Heart left ventricle (tissue), 16 donors: ENCODE measurements at regions of chr17 and their contacts with region 1.

Region 1: GRCh38 chr17:10549096-10549842 is at the start of gene MYH2:
- DNase-seq: no peak
- ATAC-seq: no peak
- H3K4me3 ChIP-seq: no peak within 1 kb of the TSS
- H3K27ac ChIP-seq: no peak within 1 kb of the TSS
- H3K4me1 ChIP-seq: no peaks in the 10 kb centered on the region
- H3K27me3 ChIP-seq: no peaks in the 10 kb centered on the region
- CTCF ChIP-seq: no peak
- POLR2A ChIP-seq: no peak
- total RNA-seq, gene MYH2: 0.07 to 0.40 TPM in 2 of 9 donors, not detected in the others

Region 2: GRCh38 chr17:10482252-10482651 is 67.0 kb before region 1 on chr17:
- intact Hi-C with region 1: loop called in 1 of 10 experiments (anchors 10 kb)
- DNase-seq: no peak
- ATAC-seq: no peak
- H3K4me3 ChIP-seq: no peak overlapping the region
- H3K27ac ChIP-seq: no peak overlapping the region
- H3K4me1 ChIP-seq: no peaks in the 10 kb centered on the region
- H3K27me3 ChIP-seq: no peaks in the 10 kb centered on the region
- CTCF ChIP-seq: no peak
- POLR2A ChIP-seq: no peak

Region 3: DNA sequence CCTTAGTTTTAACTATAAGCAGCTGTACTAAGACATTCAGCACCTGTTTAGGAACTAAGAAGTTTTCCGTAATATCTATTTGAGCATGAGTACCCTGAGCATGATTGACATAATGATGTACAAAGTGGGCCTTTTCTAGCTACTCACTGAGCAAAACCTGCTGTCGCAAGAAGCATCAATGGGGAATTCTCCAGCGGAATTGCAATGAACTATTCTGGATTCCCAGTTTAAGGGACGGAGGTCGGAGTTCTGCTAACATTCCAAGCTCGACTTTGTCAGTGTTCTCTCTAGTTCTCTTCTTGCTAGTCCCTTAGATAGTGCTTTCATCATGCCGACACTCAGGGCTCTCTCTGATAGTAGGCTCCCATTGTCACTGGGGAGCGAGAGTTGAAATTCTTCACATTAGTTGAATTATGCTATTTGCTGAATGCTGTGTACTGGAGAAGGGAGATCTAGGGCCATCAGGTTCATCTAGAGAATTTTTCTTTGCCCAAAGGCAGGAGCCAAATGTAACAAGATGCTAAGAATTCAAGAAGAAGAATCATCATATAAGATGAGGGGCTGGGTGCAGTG is 40.4 kb after region 1 on chr17:
- intact Hi-C with region 1: no loop called
- DNase-seq: no peak
- ATAC-seq: no peak
- H3K4me3 ChIP-seq: no peak overlapping the region
- H3K27ac ChIP-seq: no peak overlapping the region
- H3K4me1 ChIP-seq: no peaks in the 10 kb centered on the region
- H3K27me3 ChIP-seq: peaks cover 0 to 11% (median 0%) of the 10 kb centered on the region in 9 donors
- CTCF ChIP-seq: no peak
- POLR2A ChIP-seq: no peak